ENCODE measurements at regions of chr12 and their contacts with region 1.

Region 1: GRCh38 chr12:96985480-96986362 is 78.7 kb downstream of the NEDD1 start:
- DNase-seq: peak; percentile 30
- H3K4me3 Mint-ChIP-seq: peak overlapping the region; percentile 61
- H3K27ac Mint-ChIP-seq: no peak overlapping the region
- H3K4me1 Mint-ChIP-seq: peaks cover 6% of the 10 kb centered on the region
- H3K27me3 Mint-ChIP-seq: peaks cover 10% of the 10 kb centered on the region

Region 2: GRCh38 chr12:96061864-96062453 is 923.8 kb before region 1 on chr12:
- CTCF ChIA-PET with region 1: no interaction called
- intact Hi-C with region 1: loop called (anchors 1 kb)
- DNase-seq: peak; percentile 90
- H3K4me3 Mint-ChIP-seq: no peak overlapping the region
- H3K27ac Mint-ChIP-seq: no peak overlapping the region
- H3K4me1 Mint-ChIP-seq: peaks cover 25% of the 10 kb centered on the region
- H3K27me3 Mint-ChIP-seq: no peaks in the 10 kb centered on the region

Region 3: GRCh38 chr12:96719660-96720363 is 265.9 kb before region 1 on chr12:
- CTCF ChIA-PET with region 1: no interaction called
- intact Hi-C with region 1: loop called (anchors 5 kb)
- DNase-seq: peak; percentile 52
- H3K4me3 Mint-ChIP-seq: peak overlapping the region; percentile 77
- H3K27ac Mint-ChIP-seq: peak overlapping the region; percentile 85
- H3K4me1 Mint-ChIP-seq: peaks cover 11% of the 10 kb centered on the region
- H3K27me3 Mint-ChIP-seq: no peaks in the 10 kb centered on the region

Region 4: DNA sequence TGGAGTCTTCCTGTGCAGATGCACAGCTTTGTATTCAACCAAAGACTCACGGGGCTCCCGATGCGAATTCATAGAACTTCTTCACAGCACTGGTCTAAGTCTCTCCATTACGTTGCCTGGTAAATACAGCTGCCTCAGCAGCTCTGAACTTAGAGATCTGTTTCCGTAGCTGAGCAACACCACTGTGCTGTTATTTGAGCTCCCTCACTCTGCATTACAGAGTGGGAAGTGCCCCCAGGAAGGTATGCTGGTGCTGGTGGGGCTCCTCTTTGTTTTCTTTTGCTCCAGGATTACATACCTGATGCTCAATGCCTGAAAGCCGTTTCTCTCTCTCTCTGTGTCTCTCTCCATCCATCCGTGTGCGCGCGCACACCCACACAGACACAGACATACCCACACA is 249.4 kb after region 1 on chr12:
- CTCF ChIA-PET with region 1: no interaction called
- intact Hi-C with region 1: no loop called
- DNase-seq: no peak
- H3K4me3 Mint-ChIP-seq: no peak overlapping the region
- H3K27ac Mint-ChIP-seq: no peak overlapping the region
- H3K4me1 Mint-ChIP-seq: no peaks in the 10 kb centered on the region
- H3K27me3 Mint-ChIP-seq: no peaks in the 10 kb centered on the region

Region 5: GRCh38 chr12:97308576-97309198 is 323.0 kb after region 1 on chr12:
- CTCF ChIA-PET with region 1: interaction called, 9 read pairs
- intact Hi-C with region 1: loop called (anchors 1 kb)
- DNase-seq: no peak
- H3K4me3 Mint-ChIP-seq: no peak overlapping the region
- H3K27ac Mint-ChIP-seq: no peak overlapping the region
- H3K4me1 Mint-ChIP-seq: no peaks in the 10 kb centered on the region
- H3K27me3 Mint-ChIP-seq: peaks cover 5% of the 10 kb centered on the region

Region 6: DNA sequence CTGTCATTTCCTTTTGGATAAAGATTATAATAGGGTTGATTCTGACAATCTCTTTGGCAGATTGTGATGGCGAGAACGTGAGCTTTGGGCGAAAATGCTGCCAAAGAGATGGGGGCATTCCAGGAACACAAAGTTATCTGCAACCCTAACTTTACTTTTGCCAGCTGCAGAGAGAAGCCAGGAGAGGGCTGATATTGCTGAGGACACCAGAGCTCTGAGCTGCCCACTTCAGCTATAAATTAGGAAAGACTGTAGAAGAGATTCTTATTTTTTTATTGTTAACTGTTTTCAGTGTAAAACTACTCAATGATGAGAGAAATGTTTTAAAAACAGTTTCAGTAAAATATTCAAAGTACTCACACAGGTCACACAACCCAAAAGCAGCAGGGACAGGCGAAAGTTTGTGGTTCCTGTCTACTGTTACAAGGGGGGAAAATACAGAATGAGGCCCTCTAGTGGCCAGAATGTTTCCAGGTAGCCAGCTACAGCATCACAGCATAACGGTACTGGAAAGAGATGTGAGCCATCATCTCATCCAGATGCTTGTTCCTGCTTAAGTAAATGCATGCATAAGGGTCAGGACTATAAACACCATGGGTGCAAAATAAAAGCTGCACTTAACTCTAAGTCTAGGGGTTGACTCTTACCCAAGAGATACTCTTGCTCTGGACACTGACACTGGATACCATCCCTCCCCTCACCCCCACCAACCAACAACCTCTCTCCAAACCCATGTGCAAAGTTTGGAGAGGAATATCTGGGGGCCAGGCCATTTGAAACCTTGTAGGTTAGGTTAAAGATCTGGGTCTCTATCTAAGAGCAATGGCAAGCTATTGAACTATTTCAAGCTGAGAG is 975.3 kb after region 1 on chr12:
- CTCF ChIA-PET with region 1: no interaction called
- intact Hi-C with region 1: loop called (anchors 5 kb)
- DNase-seq: peak; percentile 41
- H3K4me3 Mint-ChIP-seq: no peak overlapping the region
- H3K27ac Mint-ChIP-seq: no peak overlapping the region
- H3K4me1 Mint-ChIP-seq: no peaks in the 10 kb centered on the region
- H3K27me3 Mint-ChIP-seq: no peaks in the 10 kb centered on the region

Measured in activated naive CD4-positive, alpha-beta T cell treated with anti-CD3 and anti-CD28 coated beads for 36 hours (primary cell).